ENCODE measurements at regions of chr5 and their contacts with region 1.

Region 1: DNA sequence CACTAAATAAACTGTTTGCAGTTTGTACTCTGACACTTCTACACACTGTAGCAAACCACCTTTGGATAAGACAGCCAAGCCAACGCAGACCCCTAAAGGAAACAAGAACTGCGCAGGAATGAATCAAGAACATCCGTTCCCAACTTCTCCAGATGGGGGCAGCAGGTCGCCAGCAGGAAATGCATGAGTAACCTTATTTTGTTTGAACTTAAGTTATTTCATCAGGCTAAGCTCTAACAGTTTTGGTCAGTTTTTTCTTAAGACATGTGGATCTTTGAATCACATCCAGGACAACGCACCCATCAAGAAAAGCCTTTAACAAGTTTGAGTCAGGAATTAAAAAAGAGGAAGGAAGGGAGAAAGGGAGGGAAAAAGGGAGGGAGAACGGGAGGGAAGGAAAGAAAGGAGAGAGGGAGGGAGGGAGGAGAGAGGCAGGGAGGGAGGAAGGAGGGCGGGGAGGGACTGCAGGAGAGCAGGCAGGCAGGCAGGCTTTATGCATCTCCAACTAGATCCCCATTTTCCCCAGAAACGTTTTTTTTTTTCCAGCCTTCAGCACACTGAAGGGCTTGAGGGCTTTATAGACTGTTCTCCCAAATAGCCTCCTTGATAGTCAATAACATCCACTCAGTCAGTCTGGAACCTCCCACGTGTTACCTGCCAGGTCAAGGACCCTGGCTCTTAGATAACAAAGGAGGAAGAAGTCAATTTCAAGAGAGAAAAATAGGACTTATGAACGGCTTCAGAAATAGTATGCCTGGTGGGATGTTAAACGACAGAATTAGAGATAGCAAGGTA is 22.2 kb downstream of the BHMT start:
- DNase-seq: peak; percentile 82
- H3K4me3 Mint-ChIP-seq: peak overlapping the region; percentile 64
- H3K27ac Mint-ChIP-seq: peak overlapping the region; percentile 93
- H3K4me1 Mint-ChIP-seq: peaks cover 18% of the 10 kb centered on the region
- H3K27me3 Mint-ChIP-seq: peaks cover 1% of the 10 kb centered on the region
- CTCF ChIP-seq: peak; percentile 58

Region 2: DNA sequence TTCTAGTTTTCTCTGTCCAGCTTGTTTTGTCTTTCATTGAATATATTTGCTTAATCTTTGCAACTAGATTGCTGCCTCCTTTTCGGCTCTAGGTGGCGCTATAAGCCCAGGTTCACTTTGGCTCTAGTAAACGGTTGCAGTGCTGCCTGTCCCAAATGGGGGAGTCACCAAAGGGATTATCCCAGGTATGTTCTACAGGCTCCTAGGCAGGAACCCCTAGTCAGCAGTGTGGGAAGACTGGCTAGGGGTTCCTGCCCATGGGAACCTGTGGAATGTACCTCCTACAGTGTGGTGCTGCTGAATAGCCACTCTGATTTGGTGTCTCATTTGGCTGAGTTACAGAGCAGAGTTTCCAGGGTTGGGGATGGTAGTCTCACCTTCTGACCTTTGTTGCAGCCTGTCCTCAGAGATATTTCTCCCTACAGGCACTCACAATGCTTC is 233.9 kb before region 1 on chr5:
- CTCF ChIA-PET with region 1: interaction called, 30 read pairs
- intact Hi-C with region 1: loop called (anchors 1 kb)
- DNase-seq: peak; percentile 65
- H3K4me3 Mint-ChIP-seq: no peak overlapping the region
- H3K27ac Mint-ChIP-seq: no peak overlapping the region
- H3K4me1 Mint-ChIP-seq: peaks cover 1% of the 10 kb centered on the region
- H3K27me3 Mint-ChIP-seq: no peaks in the 10 kb centered on the region
- CTCF ChIP-seq: peak; percentile 92

Region 3: GRCh38 chr5:79172269-79172668 is 38.4 kb after region 1 on chr5:
- CTCF ChIA-PET with region 1: no interaction called
- intact Hi-C with region 1: no loop called
- DNase-seq: no peak
- H3K4me3 Mint-ChIP-seq: no peak overlapping the region
- H3K27ac Mint-ChIP-seq: no peak overlapping the region
- H3K4me1 Mint-ChIP-seq: peaks cover 12% of the 10 kb centered on the region
- H3K27me3 Mint-ChIP-seq: no peaks in the 10 kb centered on the region
- CTCF ChIP-seq: no peak

Region 4: DNA sequence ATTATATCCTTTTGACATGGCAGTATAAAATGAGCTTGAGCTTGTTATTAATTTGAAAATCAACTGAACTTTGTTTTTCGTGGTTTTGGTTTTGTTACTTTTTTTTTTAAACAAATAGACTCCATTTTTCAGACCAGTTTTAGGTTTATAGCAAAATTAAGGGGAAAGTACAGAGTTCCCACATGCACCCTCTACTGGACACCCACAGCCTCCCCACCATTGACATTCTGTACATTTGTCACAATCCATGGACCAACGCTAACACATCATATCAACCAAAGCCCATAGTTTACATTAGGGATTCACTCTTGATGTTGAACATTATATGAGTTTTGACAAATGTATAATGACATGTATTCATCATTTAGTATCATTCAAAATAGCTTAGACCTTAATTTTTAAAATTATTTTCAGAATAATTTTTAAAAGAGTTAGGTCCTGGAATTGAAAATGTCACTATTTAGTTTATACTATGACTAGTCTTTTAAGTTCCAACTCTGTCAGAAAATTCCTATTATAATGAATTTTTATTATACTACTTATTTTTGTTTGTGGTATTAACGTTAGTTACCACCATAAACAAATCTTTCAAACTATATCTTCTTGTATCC is 66.8 kb after region 1 on chr5:
- CTCF ChIA-PET with region 1: interaction called, 7 read pairs
- intact Hi-C with region 1: loop called (anchors 1 kb)
- DNase-seq: peak; percentile 28
- H3K4me3 Mint-ChIP-seq: no peak overlapping the region
- H3K27ac Mint-ChIP-seq: no peak overlapping the region
- H3K4me1 Mint-ChIP-seq: no peaks in the 10 kb centered on the region
- H3K27me3 Mint-ChIP-seq: no peaks in the 10 kb centered on the region
- CTCF ChIP-seq: peak; percentile 30

Region 5: DNA sequence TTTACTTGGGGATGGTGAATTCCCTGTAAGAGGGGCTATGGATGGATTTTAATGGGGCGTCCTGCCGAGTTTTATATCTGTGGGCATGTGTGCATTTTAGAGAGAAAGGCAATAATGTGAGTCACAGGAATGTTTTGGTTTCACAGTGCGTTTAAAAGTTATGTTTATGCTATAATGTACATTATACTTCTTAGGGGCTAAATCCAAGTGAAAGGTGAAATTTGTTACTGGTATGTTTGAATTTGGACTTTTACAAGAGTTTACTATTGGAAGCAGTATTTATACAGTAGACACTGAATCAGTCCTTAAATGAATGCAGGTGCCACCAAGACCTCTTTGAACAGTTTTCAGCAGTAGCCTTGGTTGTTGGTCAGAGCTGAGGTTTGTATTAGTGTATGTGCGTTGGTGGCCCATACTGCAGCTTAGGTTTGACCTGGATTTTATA is 107.7 kb after region 1 on chr5:
- CTCF ChIA-PET with region 1: interaction called, 16 read pairs
- intact Hi-C with region 1: loop called (anchors 5 kb)
- DNase-seq: no peak
- H3K4me3 Mint-ChIP-seq: no peak overlapping the region
- H3K27ac Mint-ChIP-seq: no peak overlapping the region
- H3K4me1 Mint-ChIP-seq: peaks cover 44% of the 10 kb centered on the region
- H3K27me3 Mint-ChIP-seq: no peaks in the 10 kb centered on the region
- CTCF ChIP-seq: no peak

Region 6: GRCh38 chr5:79464695-79465332 is 331.0 kb after region 1 on chr5:
- CTCF ChIA-PET with region 1: interaction called, 11 read pairs
- intact Hi-C with region 1: loop called (anchors 1 kb)
- DNase-seq: no peak
- H3K4me3 Mint-ChIP-seq: no peak overlapping the region
- H3K27ac Mint-ChIP-seq: no peak overlapping the region
- H3K4me1 Mint-ChIP-seq: no peaks in the 10 kb centered on the region
- H3K27me3 Mint-ChIP-seq: no peaks in the 10 kb centered on the region
- CTCF ChIP-seq: peak; percentile 68

Region 7: DNA sequence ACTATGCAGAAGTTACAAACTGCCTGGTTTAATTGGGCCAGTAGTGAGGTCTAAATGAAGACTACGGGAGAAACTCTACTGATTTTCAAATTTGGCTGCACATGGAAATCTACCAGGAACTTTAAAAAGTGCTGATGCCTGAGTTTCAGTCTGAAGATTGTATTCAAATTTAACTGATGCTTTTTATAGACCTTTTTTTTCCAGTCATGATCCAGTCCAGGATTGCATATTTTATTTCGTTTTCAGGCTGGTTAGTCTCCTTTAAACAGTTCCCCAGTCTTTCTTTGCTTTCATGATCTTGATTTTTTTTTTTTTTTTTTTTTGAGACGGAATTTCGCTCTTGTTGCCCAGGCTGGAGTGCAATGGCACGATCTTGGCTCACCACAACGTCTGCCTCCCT is 1162.3 kb after region 1 on chr5:
- CTCF ChIA-PET with region 1: no interaction called
- intact Hi-C with region 1: no loop called
- DNase-seq: no peak
- H3K4me3 Mint-ChIP-seq: no peak overlapping the region
- H3K27ac Mint-ChIP-seq: no peak overlapping the region
- H3K4me1 Mint-ChIP-seq: no peaks in the 10 kb centered on the region
- H3K27me3 Mint-ChIP-seq: no peaks in the 10 kb centered on the region
- CTCF ChIP-seq: no peak

Measured in Calu3 (cell line).